ENCODE measurements at regions of chr11 and their contacts with region 1.

Region 1: GRCh38 chr11:123110356-123110755 is 48.4 kb upstream of the HSPA8 start:
- DNase-seq: no peak
- ATAC-seq: no peak

Region 2: GRCh38 chr11:121321614-121322243 is 1788.6 kb before region 1 on chr11:
- intact Hi-C with region 1: no loop called
- DNase-seq: no peak
- ATAC-seq: peak; percentile 89

Region 3: GRCh38 chr11:122202951-122203456 is 907.4 kb before region 1 on chr11:
- intact Hi-C with region 1: no loop called
- DNase-seq: peak; percentile 81
- ATAC-seq: peak; percentile 91

Region 4: GRCh38 chr11:123233280-123233974 is 123.1 kb after region 1 on chr11:
- intact Hi-C with region 1: loop called (anchors 5 kb)
- DNase-seq: no peak
- ATAC-seq: no peak

Region 5: GRCh38 chr11:123246749-123247495 is 136.6 kb after region 1 on chr11:
- intact Hi-C with region 1: loop called (anchors 5 kb)
- DNase-seq: peak; percentile 87
- ATAC-seq: peak; percentile 85

Measured in left ventricle myocardium superior (tissue), 1 donor.